Gastrocnemius medialis (tissue), 4 donors: ENCODE measurements at regions of chr15 and their contacts with region 1.

Region 1: GRCh38 chr15:70488002-70488605 is 275.3 kb downstream of the UACA start:
- DNase-seq: peak in 1 of 2 donors; percentile 52
- ATAC-seq: peak; percentile 48 to 76
- H3K4me3 ChIP-seq: no peak overlapping the region
- H3K27ac ChIP-seq: no peak overlapping the region
- H3K4me1 ChIP-seq: no peaks in the 10 kb centered on the region
- H3K27me3 ChIP-seq: no peaks in the 10 kb centered on the region
- CTCF ChIP-seq: peak; percentile 85 to 97 (median 93)
- POLR2A ChIP-seq: no peak

Region 2: DNA sequence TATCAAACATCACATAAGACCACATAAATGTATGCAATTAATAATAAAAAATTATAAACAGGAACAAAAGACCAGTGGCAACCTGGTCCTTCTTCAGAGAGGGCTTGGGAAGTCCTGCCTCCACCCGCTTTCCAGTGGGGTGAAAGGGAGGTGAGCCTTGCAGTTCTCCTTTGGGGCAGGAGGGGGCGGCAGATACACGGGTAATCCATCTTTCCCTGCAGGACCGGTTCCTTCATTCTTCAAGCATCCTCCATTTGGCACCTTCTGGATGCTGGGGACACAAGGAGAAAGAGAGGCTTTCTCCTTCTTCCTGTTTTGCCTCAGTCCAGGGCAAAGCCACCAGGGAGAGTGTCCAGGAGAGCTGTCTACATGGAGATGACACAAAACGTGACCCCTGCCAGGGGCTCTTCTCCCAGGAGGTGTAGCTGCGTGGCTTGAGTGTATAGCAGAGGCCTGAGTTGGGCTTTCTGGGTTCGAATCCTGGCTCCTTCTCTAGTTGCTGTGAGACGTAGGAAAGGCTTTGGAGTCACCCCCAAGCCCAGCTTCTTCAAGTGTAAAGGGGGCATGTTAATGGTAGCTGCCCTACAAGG is 1012.2 kb before region 1 on chr15:
- in situ Hi-C with region 1: loop called (anchors 5 to 10 kb)
- intact Hi-C with region 1: loop called (anchors 2 kb)
- DNase-seq: peak; percentile 45 to 70
- ATAC-seq: peak; percentile 81 to 90
- H3K4me3 ChIP-seq: no peak overlapping the region
- H3K27ac ChIP-seq: no peak overlapping the region
- H3K4me1 ChIP-seq: no peaks in the 10 kb centered on the region
- H3K27me3 ChIP-seq: no peaks in the 10 kb centered on the region
- CTCF ChIP-seq: peak; percentile 79 to 93 (median 88)
- POLR2A ChIP-seq: no peak

Region 3: DNA sequence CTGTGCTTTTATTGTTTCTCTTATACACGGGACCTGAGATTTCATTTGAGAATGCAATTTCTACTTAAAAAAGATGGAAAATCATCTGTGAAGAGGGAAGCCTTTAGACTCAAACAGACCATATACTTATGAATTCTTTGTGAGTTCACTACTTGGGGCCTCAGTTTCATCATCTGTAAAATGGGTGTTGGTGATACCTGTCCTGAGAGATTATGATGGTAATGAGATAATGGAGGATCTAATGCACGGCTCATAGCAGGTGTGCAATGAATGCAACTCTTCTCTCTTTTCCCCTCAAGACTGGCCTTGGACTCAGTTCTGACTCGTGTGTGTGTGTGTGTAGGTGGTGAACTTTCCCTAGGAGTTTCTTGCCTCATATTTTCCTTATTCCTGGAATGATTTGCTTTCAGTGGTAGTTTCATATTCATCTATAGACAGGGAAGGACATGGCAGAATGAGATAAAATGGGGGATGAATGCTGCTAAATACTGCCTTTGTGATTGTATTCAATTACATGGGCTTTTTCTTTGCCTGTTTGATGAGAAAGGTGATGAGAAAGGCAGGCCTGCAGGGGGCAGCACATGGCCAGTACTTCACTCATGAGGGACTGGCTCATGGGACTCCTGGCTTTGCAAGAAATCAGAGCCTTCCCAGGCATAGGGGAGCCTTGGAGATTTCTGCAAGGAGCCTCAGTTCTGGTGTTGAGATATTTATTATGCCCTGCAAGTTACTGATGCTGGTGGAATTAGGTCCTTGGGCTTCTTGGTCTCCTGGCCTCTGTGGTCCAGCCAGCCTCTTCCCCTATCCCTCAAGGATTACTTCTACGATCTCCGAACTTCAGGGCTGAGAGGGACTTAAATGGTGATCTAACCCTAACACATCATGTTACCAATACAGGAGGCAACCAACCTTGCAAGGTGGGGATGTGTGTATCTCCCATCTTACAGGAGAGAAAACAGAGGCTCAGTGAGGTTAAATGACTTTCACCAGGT is 964.8 kb before region 1 on chr15:
- in situ Hi-C with region 1: no loop called
- intact Hi-C with region 1: loop called (anchors 5 kb)
- DNase-seq: peak in 1 of 2 donors; percentile 54
- ATAC-seq: peak; percentile 69 to 73
- H3K4me3 ChIP-seq: no peak overlapping the region
- H3K27ac ChIP-seq: no peak overlapping the region
- H3K4me1 ChIP-seq: no peaks in the 10 kb centered on the region
- H3K27me3 ChIP-seq: no peaks in the 10 kb centered on the region
- CTCF ChIP-seq: peak; percentile 6 to 65 (median 55)
- POLR2A ChIP-seq: no peak

Region 4: GRCh38 chr15:69576035-69576526 is 912.0 kb before region 1 on chr15:
- in situ Hi-C with region 1: loop called (anchors 10 kb)
- intact Hi-C with region 1: loop called (anchors 1 kb)
- DNase-seq: peak in 1 of 2 donors; percentile 39
- ATAC-seq: peak; percentile 78 to 85
- H3K4me3 ChIP-seq: no peak overlapping the region
- H3K27ac ChIP-seq: no peak overlapping the region
- H3K4me1 ChIP-seq: no peaks in the 10 kb centered on the region
- H3K27me3 ChIP-seq: no peaks in the 10 kb centered on the region
- CTCF ChIP-seq: peak; percentile 60 to 78 (median 71)
- POLR2A ChIP-seq: no peak

Region 5: DNA sequence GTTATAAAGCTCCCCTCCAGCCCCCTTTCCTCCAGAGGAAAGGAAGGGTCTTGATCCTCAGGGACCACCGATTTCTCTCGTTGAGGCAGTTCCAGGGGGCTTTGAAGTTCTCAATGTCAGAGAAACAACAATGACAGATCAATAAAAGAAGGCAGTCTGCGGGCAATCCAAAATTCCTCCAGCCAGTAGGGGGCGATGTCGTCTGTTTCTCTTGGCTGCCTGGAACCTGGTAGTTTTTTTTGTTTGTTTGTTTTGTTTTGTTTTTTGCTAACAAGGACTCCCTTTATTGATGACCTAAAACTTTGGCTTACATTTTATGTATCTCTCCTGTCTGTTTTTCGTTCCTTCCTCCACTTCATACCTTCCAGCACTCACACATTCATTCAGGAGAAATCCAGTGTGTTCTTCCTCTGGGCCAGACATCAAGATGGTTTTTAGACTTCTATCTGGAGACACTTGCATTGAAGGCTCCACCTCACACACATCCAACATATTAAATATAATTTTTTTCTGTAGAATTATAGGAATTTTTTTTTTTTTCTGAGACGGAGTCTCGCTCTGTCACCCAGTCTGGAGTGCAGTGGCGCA is 758.8 kb before region 1 on chr15:
- in situ Hi-C with region 1: loop called in 3 of 4 experiments (anchors 10 to 25 kb)
- intact Hi-C with region 1: loop called (anchors 5 kb)
- DNase-seq: no peak
- ATAC-seq: no peak
- H3K4me3 ChIP-seq: no peak overlapping the region
- H3K27ac ChIP-seq: no peak overlapping the region
- H3K4me1 ChIP-seq: no peaks in the 10 kb centered on the region
- H3K27me3 ChIP-seq: no peaks in the 10 kb centered on the region
- CTCF ChIP-seq: peak; percentile 25 to 77 (median 61)
- POLR2A ChIP-seq: no peak